ENCODE measurements at regions of chr12 and their contacts with region 1.

Region 1: GRCh38 chr12:100672075-100672592 is 98.7 kb downstream of the GAS2L3 start:
- DNase-seq: peak in 1 of 2 experiments; percentile 94
- H3K4me3 ChIP-seq: no peak overlapping the region
- H3K27ac ChIP-seq: no peak overlapping the region
- H3K4me1 ChIP-seq: no peaks in the 10 kb centered on the region
- H3K27me3 ChIP-seq: no peaks in the 10 kb centered on the region
- CTCF ChIP-seq: peak; percentile 70 to 90 (median 85)
- EP300 ChIP-seq: no peak
- POLR2A ChIP-seq: no peak
- RAD21 ChIP-seq: peak; percentile 57 to 63

Region 2: GRCh38 chr12:100243137-100243536 is 429.0 kb before region 1 on chr12:
- CTCF ChIA-PET with region 1: no interaction called
- POLR2A ChIA-PET with region 1: no interaction called
- DNase-seq: no peak
- H3K4me3 ChIP-seq: no peak overlapping the region
- H3K27ac ChIP-seq: no peak overlapping the region
- H3K4me1 ChIP-seq: no peaks in the 10 kb centered on the region
- H3K27me3 ChIP-seq: no peaks in the 10 kb centered on the region
- CTCF ChIP-seq: no peak
- EP300 ChIP-seq: no peak
- POLR2A ChIP-seq: no peak
- RAD21 ChIP-seq: no peak

Region 3: DNA sequence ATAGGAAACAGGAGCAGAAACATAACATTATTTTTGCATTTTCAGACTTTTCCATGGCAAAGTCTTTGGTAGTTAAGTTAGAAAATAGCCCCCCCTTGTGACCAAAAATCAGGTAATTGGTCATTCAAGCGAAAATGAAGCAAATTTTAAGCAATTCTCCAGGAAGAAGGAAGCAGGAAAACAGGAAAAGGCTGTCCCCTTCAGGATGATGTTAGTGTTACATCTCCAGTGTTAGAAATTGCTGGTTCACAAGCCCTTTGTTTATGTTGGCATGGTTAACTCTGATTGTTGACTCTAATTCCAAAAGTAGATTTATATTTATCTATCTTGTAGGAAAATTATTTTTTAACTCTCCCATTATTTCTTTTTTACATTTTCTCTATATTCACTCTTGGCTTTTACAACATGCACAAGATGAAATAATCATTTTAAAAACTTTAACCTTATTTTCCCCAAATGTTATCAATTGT is 117.5 kb before region 1 on chr12:
- CTCF ChIA-PET with region 1: interaction called, 13 read pairs
- POLR2A ChIA-PET with region 1: no interaction called
- DNase-seq: no peak
- H3K4me3 ChIP-seq: no peak overlapping the region
- H3K27ac ChIP-seq: no peak overlapping the region
- H3K4me1 ChIP-seq: no peaks in the 10 kb centered on the region
- H3K27me3 ChIP-seq: peaks cover 0 to 1% (median 0%) of the 10 kb centered on the region in 4 experiments; a peak in 1 of 7 replicates
- CTCF ChIP-seq: peak in 2 of 3 experiments; percentile 90 to 94; a peak in 3 of 4 replicates
- EP300 ChIP-seq: no peak
- POLR2A ChIP-seq: no peak
- RAD21 ChIP-seq: peak; percentile 97 to 99

Region 4: DNA sequence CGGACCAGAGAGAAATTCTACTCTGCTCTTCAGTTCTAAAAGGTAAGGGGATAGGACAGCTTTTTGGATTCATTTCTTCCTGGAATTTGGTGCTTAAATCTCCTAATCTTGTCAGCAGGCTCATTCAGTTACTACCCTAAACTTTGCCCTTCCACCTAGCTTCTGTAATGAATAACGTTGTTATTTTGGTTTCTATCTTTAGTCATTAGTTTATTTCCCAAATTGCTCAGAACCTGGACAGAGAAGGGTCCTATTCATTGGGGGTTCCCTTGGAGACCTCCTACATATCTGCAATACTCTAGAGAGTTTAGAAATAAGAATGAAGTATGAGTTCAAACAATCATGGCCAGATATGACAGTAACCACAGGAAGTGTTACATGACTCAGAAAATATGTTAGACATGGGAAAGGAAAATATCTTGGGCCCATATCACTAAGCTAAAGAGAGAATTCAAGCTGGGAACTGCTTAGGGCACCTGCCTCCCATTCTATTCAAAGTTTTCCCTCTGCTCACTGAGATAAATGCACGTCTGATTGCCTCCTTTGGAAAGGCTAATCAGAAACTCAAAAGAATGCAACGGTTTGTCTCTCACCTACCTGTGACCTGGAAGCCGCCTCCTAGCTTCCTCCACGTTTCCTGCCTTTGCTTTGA is 10.7 kb before region 1 on chr12:
- CTCF ChIA-PET with region 1: interaction called, 101 read pairs
- POLR2A ChIA-PET with region 1: no interaction called
- DNase-seq: no peak
- H3K4me3 ChIP-seq: no peak overlapping the region
- H3K27ac ChIP-seq: no peak overlapping the region
- H3K4me1 ChIP-seq: peaks cover 0 to 3% (median 0%) of the 10 kb centered on the region in 4 experiments; a peak in 1 of 7 replicates
- H3K27me3 ChIP-seq: no peaks in the 10 kb centered on the region
- CTCF ChIP-seq: no peak
- EP300 ChIP-seq: no peak
- POLR2A ChIP-seq: no peak
- RAD21 ChIP-seq: no peak

Region 5: GRCh38 chr12:100699209-100699608 is 27.1 kb after region 1 on chr12:
- CTCF ChIA-PET with region 1: interaction called, 29 read pairs
- POLR2A ChIA-PET with region 1: no interaction called
- DNase-seq: no peak
- H3K4me3 ChIP-seq: no peak overlapping the region
- H3K27ac ChIP-seq: no peak overlapping the region
- H3K4me1 ChIP-seq: no peaks in the 10 kb centered on the region
- H3K27me3 ChIP-seq: no peaks in the 10 kb centered on the region
- CTCF ChIP-seq: no peak
- EP300 ChIP-seq: no peak
- POLR2A ChIP-seq: no peak
- RAD21 ChIP-seq: no peak

Region 6: DNA sequence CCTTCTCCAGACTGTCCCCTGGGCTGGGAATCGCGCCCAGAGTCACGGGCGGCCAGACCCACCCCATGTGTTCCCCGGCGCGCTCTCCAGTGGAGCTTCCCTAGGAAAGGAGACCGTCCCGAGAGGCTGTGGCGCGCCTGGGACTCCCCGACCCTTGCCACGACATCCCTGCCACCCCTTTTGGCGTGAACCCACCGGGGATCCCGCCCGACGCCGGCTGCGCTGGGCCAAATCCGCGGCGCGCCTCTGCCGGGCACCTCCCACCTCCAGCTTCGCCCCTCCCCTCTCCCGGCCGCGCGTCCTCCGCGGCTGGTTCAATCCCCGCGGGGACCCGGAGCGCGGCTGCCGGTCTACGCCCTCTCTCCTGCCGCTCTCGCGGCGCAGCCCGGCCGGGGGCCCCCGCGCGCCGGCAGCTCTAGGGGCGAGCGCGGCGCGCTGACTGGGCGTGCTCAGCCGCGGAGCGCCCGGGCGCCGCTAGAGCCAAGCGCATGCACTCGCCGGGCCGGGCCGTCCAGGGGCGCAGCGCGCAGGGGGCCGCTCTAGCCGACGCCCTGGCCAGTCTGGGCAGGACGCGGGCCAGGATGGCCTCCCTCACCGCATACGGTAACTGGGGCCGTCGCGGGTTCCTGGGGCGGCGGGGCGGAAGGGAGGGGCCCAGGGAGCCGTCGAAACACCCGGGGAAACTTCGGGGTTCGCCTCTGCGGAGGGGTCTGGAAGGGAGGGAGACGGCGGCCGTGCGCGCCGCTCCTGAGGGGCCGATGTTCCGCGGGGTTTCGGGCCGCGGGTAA is 45.0 kb after region 1 on chr12:
- CTCF ChIA-PET with region 1: interaction called, 29 read pairs
- POLR2A ChIA-PET with region 1: no interaction called
- DNase-seq: peak in 1 of 2 experiments; percentile 72
- H3K4me3 ChIP-seq: peak overlapping the region; percentile 42 to 64 (median 52)
- H3K27ac ChIP-seq: no peak overlapping the region
- H3K4me1 ChIP-seq: peaks cover 0 to 8% (median 4%) of the 10 kb centered on the region in 4 experiments
- H3K27me3 ChIP-seq: peaks cover 20 to 43% (median 32%) of the 10 kb centered on the region in 4 experiments
- CTCF ChIP-seq: no peak
- EP300 ChIP-seq: no peak
- POLR2A ChIP-seq: no peak
- RAD21 ChIP-seq: no peak

Region 7: GRCh38 chr12:100741084-100741711 is 69.1 kb after region 1 on chr12:
- CTCF ChIA-PET with region 1: interaction called, 68 read pairs
- POLR2A ChIA-PET with region 1: no interaction called
- DNase-seq: no peak
- H3K4me3 ChIP-seq: no peak overlapping the region
- H3K27ac ChIP-seq: no peak overlapping the region
- H3K4me1 ChIP-seq: no peaks in the 10 kb centered on the region
- H3K27me3 ChIP-seq: no peaks in the 10 kb centered on the region
- CTCF ChIP-seq: peak in 2 of 3 experiments; percentile 42 to 71; a peak in 2 of 4 replicates
- EP300 ChIP-seq: no peak
- POLR2A ChIP-seq: no peak
- RAD21 ChIP-seq: peak; percentile 56 to 59

Region 8: GRCh38 chr12:100767950-100768349 is 95.8 kb after region 1 on chr12:
- CTCF ChIA-PET with region 1: no interaction called
- POLR2A ChIA-PET with region 1: no interaction called
- DNase-seq: no peak
- H3K4me3 ChIP-seq: no peak overlapping the region
- H3K27ac ChIP-seq: no peak overlapping the region
- H3K4me1 ChIP-seq: no peaks in the 10 kb centered on the region
- H3K27me3 ChIP-seq: no peaks in the 10 kb centered on the region
- CTCF ChIP-seq: no peak
- EP300 ChIP-seq: no peak
- POLR2A ChIP-seq: no peak
- RAD21 ChIP-seq: no peak

Region 9: GRCh38 chr12:100794441-100795173 is 122.5 kb after region 1 on chr12 and contains the start of gene ANO4:
- CTCF ChIA-PET with region 1: no interaction called
- POLR2A ChIA-PET with region 1: no interaction called
- DNase-seq: peak in 1 of 2 experiments; percentile 53
- H3K4me3 ChIP-seq: peak within 1 kb of the TSS in 3 of 4 experiments; percentile 23 to 46 (median 27); a peak in 4 of 8 replicates
- H3K27ac ChIP-seq: no peak within 1 kb of the TSS
- H3K4me1 ChIP-seq: peaks cover 4 to 17% (median 12%) of the 10 kb centered on the region in 4 experiments
- H3K27me3 ChIP-seq: peaks cover 0 to 4% (median under 1%) of the 10 kb centered on the region in 4 experiments; a peak in 3 of 7 replicates
- CTCF ChIP-seq: no peak
- EP300 ChIP-seq: no peak
- POLR2A ChIP-seq: no peak
- RAD21 ChIP-seq: no peak
- total RNA-seq, gene ANO4: 2.9 and 3.4 TPM in 2 replicates

Region 10: GRCh38 chr12:100877776-100878175 is 205.6 kb after region 1 on chr12:
- CTCF ChIA-PET with region 1: no interaction called
- POLR2A ChIA-PET with region 1: no interaction called
- DNase-seq: no peak
- H3K4me3 ChIP-seq: no peak overlapping the region
- H3K27ac ChIP-seq: no peak overlapping the region
- H3K4me1 ChIP-seq: no peaks in the 10 kb centered on the region
- H3K27me3 ChIP-seq: no peaks in the 10 kb centered on the region
- CTCF ChIP-seq: peak in 2 of 3 experiments; percentile 16 to 50; a peak in 2 of 4 replicates
- EP300 ChIP-seq: no peak
- POLR2A ChIP-seq: no peak
- RAD21 ChIP-seq: no peak

Measured in H1 (cell line).